ENCODE measurements at regions of chr17 and their contacts with region 1.

Region 1: GRCh38 chr17:44070455-44071197 is at the start of gene G6PC3:
- DNase-seq: peak; percentile 94 to 97
- ATAC-seq: peak; percentile 92 to 97 (median 94)
- H3K4me3 ChIP-seq: peak within 1 kb of the TSS; percentile 46 to 81 (median 70)
- H3K27ac ChIP-seq: peak within 1 kb of the TSS; percentile 36 to 94 (median 88)
- H3K4me1 ChIP-seq: peaks cover 9 to 63% (median 31%) of the 10 kb centered on the region in 9 donors
- H3K27me3 ChIP-seq: no peaks in the 10 kb centered on the region
- CTCF ChIP-seq: peak in 4 of 9 donors; percentile 8 to 36 (median 23)
- total RNA-seq, gene G6PC3: 28.9 to 47.3 (median 32.9) TPM

Region 2: DNA sequence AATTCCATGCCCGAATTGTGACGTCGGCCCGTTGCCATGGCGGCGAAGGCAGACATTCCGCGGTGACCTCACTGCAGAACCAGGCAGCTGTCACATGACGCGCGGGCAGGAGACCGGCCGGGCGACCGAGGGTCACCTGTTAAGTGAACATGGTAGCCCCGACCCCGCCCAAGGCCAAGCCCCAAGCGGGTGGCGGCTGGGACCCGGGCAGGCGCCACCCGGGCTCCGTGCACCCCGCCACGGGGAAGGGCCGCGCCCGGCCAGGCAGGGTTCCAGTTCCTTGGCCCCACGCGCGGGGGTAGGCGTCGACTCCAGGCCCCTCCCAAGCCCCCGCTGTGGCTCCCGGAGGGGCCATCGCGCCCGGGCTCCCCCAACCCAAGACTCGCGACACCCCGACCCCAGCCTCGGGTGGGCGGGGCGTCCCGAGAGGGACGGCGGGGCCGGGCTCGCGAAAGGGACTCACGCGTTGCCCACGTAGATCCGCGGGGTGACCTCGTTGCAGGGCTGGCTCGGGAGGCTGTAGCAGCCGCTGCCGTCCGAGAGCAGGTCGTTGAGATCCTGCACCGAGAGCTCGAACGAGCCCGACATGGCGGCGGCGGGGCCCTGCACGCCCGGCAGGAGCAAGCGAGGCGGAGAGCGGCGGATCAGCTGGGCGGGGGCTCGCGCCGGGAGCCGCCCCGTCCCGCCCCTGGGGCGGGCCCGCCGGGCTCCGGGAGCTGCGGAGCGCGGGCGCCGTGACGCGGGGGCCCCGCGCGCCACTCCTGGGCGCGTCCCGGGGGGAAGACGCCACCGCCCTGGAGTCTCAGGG is 292.1 kb before region 1 on chr17 and contains the start of gene DUSP3:
- intact Hi-C with region 1: no loop called
- DNase-seq: peak; percentile 95 to 96
- ATAC-seq: peak; percentile 87 to 96 (median 90)
- H3K4me3 ChIP-seq: peak within 1 kb of the TSS; percentile 70 to 100 (median 93)
- H3K27ac ChIP-seq: peak within 1 kb of the TSS; percentile 96 to 100 (median 100)
- H3K4me1 ChIP-seq: peaks cover 2 to 69% (median 41%) of the 10 kb centered on the region in 9 donors
- H3K27me3 ChIP-seq: no peaks in the 10 kb centered on the region
- CTCF ChIP-seq: peak in 1 of 9 donors; percentile 6
- total RNA-seq, gene DUSP3: 222 to 359 (median 297) TPM

Region 3: DNA sequence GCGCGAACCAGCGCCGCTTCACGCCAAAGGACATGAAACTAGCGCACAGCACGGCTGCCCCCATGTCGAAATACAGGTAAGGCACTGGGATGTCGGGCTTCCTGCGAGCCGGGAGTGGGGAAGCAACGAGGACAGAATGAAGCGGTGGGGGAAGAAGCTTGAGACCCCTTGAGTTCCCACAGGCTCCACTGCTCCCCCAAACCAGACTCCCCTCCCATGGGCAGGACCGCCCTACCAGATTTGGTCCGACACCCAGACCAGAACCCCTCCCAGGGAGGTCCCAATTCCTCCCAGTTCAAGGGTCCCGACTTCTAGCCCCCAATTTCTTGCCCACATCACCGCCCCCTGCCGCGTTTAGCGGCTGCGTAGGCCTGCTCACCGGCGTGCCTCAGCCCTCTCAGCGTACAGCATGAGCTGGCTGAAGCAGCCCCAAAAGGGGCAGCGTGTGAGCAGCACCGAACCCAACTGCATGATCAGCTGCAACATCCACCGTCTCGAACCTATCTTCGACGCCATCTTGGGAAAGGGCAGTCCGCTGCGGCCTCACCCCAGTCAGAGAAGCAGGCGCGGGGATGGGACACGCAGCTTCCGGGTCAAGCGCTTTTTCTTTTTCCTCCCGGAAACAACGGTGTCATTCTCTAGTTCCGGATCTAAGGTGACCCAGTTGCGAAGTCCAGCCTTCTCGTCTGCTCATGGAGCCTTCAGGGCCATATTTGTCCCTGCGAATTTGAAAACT is 56.0 kb before region 1 on chr17 and contains the start of gene TMEM101:
- intact Hi-C with region 1: loop called in 2 of 10 experiments (anchors 2 to 5 kb)
- DNase-seq: peak; percentile 87 to 93
- ATAC-seq: peak; percentile 83 to 97 (median 94)
- H3K4me3 ChIP-seq: peak within 1 kb of the TSS; percentile 61 to 99 (median 76)
- H3K27ac ChIP-seq: peak within 1 kb of the TSS in 9 of 10 donors; percentile 57 to 92 (median 78)
- H3K4me1 ChIP-seq: peaks cover 0 to 46% (median 28%) of the 10 kb centered on the region in 9 donors
- H3K27me3 ChIP-seq: no peaks in the 10 kb centered on the region
- CTCF ChIP-seq: no peak
- total RNA-seq, gene TMEM101: 15.6 to 22.1 (median 17.9) TPM

Region 4: GRCh38 chr17:44095642-44096496 is 25.2 kb after region 1 on chr17:
- intact Hi-C with region 1: loop called in 1 of 10 experiments (anchors 1 kb)
- DNase-seq: peak; percentile 64 to 90
- ATAC-seq: peak; percentile 26 to 88 (median 82)
- H3K4me3 ChIP-seq: peak overlapping the region in 9 of 10 donors; percentile 10 to 50 (median 38)
- H3K27ac ChIP-seq: peak overlapping the region; percentile 83 to 97 (median 92)
- H3K4me1 ChIP-seq: peaks cover 20 to 78% (median 56%) of the 10 kb centered on the region in 9 donors
- H3K27me3 ChIP-seq: no peaks in the 10 kb centered on the region
- CTCF ChIP-seq: peak in 5 of 9 donors; percentile 15 to 57 (median 31)

Region 5: DNA sequence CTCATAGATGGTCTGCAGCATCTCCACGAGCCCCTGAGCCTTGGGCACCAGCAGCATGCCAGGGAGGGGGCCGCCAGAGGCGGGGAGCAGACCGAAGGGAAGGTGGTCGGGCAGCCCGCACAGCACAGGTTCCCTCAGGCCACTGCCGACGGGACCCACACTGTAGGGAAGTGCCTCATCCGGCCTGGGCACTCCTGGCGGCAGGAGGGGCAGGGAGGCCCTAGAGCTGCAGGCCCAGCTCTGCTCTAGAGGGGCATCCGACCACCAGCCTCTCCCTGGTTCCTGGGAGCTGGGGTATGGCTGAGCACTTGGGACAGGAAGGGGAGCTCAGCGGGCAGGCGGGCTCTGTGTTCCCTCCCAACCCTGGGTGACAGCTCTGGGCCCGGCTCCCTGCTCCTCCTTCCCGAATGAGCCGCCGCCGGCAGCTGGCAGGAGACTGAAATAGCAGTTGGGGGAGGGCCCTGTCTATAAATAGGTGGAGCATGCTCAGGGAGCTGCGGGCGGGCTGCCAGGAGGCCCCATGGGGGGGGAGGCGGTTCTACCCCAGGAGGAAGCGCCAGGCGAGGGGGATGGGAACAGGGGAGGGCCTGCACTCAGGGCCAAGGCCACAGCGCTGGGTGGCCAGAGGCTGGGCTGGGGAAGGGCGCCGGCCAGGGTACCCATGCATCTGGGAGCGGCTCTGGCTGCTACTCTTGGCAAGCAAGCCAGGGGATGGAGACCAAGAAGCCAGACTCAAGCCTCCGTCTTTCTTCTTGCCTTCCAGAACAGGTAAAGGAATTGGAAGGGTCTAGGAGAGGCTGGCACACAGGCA is 40.4 kb after region 1 on chr17:
- intact Hi-C with region 1: loop called in 5 of 10 experiments (anchors 2 to 5 kb)
- DNase-seq: peak; percentile 99 to 100
- ATAC-seq: peak; percentile 79 to 90 (median 85)
- H3K4me3 ChIP-seq: peak overlapping the region; percentile 37 to 67 (median 60)
- H3K27ac ChIP-seq: peak overlapping the region; percentile 86 to 98 (median 92)
- H3K4me1 ChIP-seq: peaks cover 67 to 99% (median 96%) of the 10 kb centered on the region in 9 donors
- H3K27me3 ChIP-seq: no peaks in the 10 kb centered on the region
- CTCF ChIP-seq: no peak

Region 6: DNA sequence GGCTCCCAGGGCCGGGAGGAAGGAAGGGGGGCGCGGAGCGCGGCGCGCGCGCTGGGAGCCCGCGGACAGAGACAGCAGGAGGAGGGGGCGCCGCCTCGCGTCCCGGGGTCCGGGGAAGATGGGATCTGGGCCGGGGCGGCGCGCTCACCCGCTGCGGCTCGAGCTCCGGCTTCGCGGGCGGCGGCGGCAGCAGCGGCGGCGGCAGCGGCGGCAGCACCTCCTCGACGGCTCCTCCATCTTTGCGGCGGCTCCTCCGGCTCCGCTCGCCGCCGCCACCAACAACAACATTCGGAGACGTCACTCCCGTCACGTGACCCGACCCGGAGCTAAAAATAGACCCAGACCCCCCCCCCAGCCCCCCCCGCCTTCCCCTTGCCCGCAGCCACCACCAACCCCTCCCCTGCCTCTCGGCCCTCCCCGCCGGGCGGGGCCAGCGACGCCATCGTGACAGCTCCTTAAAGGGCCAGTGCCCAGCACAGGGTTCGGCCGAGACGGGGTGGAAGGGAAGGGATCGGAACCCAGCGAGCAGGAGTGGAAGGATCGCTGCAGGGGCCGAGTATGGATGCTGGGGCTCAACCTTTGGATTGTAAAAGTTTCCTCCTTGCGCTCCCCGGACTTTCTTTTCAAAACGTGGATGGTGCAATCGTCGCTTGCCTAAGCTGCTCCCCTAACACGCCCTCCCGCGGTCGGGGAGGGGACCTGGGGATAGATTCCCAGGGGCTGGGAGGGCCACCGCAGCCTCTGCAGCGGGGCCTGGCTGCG is 52.9 kb after region 1 on chr17 and contains the start of gene HDAC5:
- intact Hi-C with region 1: loop called in 3 of 10 experiments (anchors 2 to 5 kb)
- DNase-seq: peak; percentile 96
- ATAC-seq: peak; percentile 97 to 99 (median 98)
- H3K4me3 ChIP-seq: peak within 1 kb of the TSS; percentile 67 to 100 (median 94)
- H3K27ac ChIP-seq: peak within 1 kb of the TSS; percentile 59 to 98 (median 94)
- H3K4me1 ChIP-seq: peaks cover 3 to 54% (median 48%) of the 10 kb centered on the region in 9 donors
- H3K27me3 ChIP-seq: no peaks in the 10 kb centered on the region
- CTCF ChIP-seq: peak; percentile 43 to 84 (median 66)
- total RNA-seq, gene HDAC5: 55.2 to 85.4 (median 68.3) TPM

Measured in heart right ventricle (tissue), 16 donors.